SK-N-SH (cell line): ENCODE measurements at regions of chr6 and their contacts with region 1.

Region 1: GRCh38 chr6:35161776-35162607 is 20.9 kb upstream of the TCP11 start:
- DNase-seq: peak; percentile 34
- H3K4me3 ChIP-seq: no peak overlapping the region
- H3K27ac ChIP-seq: no peak overlapping the region
- H3K4me1 ChIP-seq: peaks cover 0 to 26% of the 10 kb centered on the region in 2 experiments; a peak in 2 of 4 replicates
- H3K27me3 ChIP-seq: no peaks in the 10 kb centered on the region
- CTCF ChIP-seq: no peak
- EP300 ChIP-seq: no peak
- RAD21 ChIP-seq: no peak

Region 2: DNA sequence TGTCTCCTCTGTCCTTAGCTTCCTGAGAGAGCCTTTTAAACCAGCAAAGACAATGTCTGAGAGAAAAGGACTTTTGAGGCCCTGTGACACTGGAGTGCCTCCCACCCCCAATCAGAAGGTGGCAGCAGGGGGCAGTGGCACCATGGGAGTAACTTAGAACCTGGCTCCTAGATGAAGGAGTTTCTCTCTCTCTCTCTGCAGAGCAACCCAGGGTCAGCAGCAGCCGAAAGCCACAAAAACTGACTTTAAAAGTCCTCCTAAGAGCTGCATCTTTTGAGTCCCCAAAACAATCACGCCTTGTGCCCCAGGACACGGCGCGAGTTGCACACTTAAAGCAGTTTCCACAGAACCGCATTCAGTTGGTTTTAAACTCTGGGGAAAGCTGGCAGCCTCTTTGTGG is 15.5 kb before region 1 on chr6:
- CTCF ChIA-PET with region 1: interaction called, 13 read pairs
- POLR2A ChIA-PET with region 1: no interaction called
- DNase-seq: peak; percentile 70
- H3K4me3 ChIP-seq: no peak overlapping the region
- H3K27ac ChIP-seq: no peak overlapping the region
- H3K4me1 ChIP-seq: peaks cover 0 to 12% of the 10 kb centered on the region in 2 experiments; a peak in 2 of 4 replicates
- H3K27me3 ChIP-seq: no peaks in the 10 kb centered on the region
- CTCF ChIP-seq: peak; percentile 71
- EP300 ChIP-seq: no peak
- RAD21 ChIP-seq: peak; percentile 80

Region 3: GRCh38 chr6:35402136-35402855 is 240.3 kb after region 1 on chr6:
- CTCF ChIA-PET with region 1: no interaction called
- POLR2A ChIA-PET with region 1: no interaction called
- DNase-seq: no peak
- H3K4me3 ChIP-seq: no peak overlapping the region
- H3K27ac ChIP-seq: no peak overlapping the region
- H3K4me1 ChIP-seq: peaks cover 6 to 20% of the 10 kb centered on the region in 2 experiments; a peak in 2 of 4 replicates
- H3K27me3 ChIP-seq: no peaks in the 10 kb centered on the region
- CTCF ChIP-seq: no peak
- EP300 ChIP-seq: no peak
- RAD21 ChIP-seq: no peak